ENCODE measurements at regions of chr21 and their contacts with region 1.

Region 1: DNA sequence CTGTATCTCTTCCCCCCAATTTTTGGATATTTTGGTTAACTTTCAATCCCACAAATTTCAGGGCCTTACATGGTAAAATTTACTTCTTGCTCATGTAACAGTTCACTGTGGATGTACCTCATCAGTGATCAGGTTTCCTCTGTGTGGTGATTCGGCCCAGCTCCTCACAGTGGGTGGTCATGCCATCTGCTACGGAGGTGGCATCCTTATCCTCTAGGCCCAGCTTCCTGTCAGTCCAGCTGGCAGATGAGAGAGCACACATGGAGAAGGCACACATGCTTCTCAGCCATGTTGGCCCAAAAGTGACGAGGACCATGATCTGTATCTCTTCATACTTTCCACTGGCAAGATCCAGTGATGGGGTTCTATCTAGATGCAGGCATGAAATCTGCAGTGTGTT is 27.2 kb downstream of the PCBP3 start:
- DNase-seq: no peak
- H3K4me3 ChIP-seq: no peak overlapping the region
- H3K27ac ChIP-seq: no peak overlapping the region
- H3K4me1 ChIP-seq: no peaks in the 10 kb centered on the region
- H3K27me3 ChIP-seq: peaks cover 3% of the 10 kb centered on the region
- CTCF ChIP-seq: no peak

Region 2: DNA sequence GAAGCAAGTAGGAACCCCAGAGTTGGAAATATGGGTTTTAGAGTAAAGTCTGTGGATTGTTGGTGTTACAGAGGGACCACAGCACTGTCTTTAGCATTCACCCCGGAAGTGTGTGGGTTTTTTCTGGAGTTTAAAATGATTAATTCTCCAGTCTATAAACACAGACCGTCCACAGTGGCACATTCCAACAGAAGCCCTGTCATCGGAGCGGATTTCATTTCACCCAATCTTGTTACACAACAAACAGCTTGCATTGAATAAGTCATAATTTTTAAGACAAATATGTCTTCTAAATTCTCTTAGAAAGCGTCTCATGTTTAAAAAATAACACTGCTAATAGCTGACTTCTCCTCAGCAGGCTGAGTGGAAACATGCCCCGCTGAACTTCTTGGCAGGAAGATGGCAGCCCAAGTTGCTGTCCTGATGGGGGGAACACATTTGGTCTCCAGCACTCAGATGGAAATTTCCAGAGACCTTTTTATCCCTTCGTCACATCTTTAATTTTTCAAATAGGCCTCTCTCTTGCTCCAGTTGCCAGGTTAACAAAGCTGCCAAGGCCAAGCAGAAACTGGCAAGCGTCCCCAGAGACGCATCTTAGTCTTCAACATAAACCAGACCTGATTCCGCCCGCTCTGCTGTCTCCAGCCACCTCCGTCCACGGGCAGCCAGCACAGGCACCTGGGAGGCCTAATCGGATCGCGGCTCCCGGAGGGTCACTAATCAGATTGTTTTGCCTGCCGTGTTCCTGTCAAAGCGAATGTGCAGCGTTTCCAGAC is 99.7 kb before region 1 on chr21:
- CTCF ChIA-PET with region 1: no interaction called
- dilution Hi-C with region 1: loop called (anchors 5 kb)
- in situ Hi-C with region 1: no loop called
- intact Hi-C with region 1: no loop called
- DNase-seq: no peak
- H3K4me3 ChIP-seq: no peak overlapping the region
- H3K27ac ChIP-seq: no peak overlapping the region
- H3K4me1 ChIP-seq: no peaks in the 10 kb centered on the region
- H3K27me3 ChIP-seq: peaks cover 2% of the 10 kb centered on the region
- CTCF ChIP-seq: no peak

Region 3: DNA sequence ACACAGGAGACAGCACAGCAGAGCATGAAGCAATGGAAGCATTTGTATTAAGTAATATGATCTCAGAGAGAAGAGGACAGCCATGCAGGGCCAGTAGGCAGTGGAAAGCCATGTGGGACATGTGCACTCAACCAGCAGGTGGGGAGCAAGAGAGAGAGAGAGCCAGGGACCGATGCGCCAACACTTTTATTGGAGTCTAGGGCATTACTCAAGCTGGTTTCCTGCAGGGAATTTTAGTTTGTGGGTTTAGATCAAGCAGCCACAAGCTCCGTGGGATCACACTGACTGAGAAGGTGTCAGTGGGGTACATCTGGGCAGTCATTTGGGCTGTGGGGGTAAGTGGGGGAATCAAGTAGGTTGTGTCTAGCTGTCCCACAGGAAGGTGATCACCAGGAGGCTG is 109.9 kb after region 1 on chr21:
- CTCF ChIA-PET with region 1: no interaction called
- dilution Hi-C with region 1: loop called (anchors 5 kb)
- in situ Hi-C with region 1: no loop called
- intact Hi-C with region 1: no loop called
- DNase-seq: no peak
- H3K4me3 ChIP-seq: no peak overlapping the region
- H3K27ac ChIP-seq: no peak overlapping the region
- H3K4me1 ChIP-seq: no peaks in the 10 kb centered on the region
- H3K27me3 ChIP-seq: peaks cover 6% of the 10 kb centered on the region
- CTCF ChIP-seq: no peak